Activated CD4-positive, alpha-beta T cell treated with anti-CD3 and anti-CD28 coated beads, Interleukin-2, amount 10 ng/mL, durations not matched to agents 7 days and 5 days (primary cell): ENCODE measurements at regions of chr11 and their contacts with region 1.

Region 1: DNA sequence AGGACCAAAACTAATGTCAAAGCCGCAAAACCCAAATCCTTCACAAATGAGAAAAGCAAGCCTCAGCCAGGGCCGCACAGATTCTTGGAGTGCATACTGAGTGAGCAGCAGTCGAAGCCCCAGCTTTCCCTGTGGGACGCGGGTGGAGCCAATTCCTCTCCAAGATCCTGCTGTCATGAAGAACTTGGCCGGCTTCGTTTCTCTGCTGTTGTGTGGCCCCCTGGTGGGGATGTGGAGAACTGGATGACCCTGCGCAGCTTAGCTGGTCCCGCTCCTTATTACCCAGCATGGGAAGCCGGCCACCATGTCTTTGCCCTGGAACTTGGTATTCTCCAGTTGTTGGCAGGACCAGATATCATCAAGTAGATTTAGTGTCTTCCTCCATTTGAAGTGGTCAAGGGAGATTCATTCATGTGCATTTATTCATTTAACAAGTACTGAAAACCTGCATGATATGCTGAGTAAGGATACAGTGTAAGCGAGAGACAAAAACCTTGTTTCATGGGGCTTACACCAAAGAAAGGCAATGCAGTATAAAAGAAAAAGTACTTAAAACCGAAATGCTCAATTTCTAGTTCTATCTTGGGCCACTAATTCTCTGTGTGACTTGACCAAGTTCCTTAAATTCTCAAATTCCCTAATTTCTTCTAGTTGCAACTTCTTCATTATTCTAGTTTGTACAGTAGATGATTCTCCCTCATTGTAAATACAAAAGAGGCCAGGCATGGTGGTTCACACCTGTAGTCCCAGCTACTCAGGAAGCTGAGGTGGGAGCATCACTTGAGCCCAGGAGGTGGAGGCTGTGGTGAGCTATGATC is 56.7 kb upstream of the CRTAM start:
- DNase-seq: peak; percentile 75
- H3K4me3 Mint-ChIP-seq: no peak overlapping the region
- H3K27ac Mint-ChIP-seq: no peak overlapping the region
- H3K4me1 Mint-ChIP-seq: peaks cover 8% of the 10 kb centered on the region
- H3K27me3 Mint-ChIP-seq: no peaks in the 10 kb centered on the region

Region 2: GRCh38 chr11:122202951-122203456 is 578.6 kb before region 1 on chr11:
- CTCF ChIA-PET with region 1: no interaction called
- POLR2A ChIA-PET with region 1: no interaction called
- DNase-seq: peak; percentile 45
- H3K4me3 Mint-ChIP-seq: no peak overlapping the region
- H3K27ac Mint-ChIP-seq: no peak overlapping the region
- H3K4me1 Mint-ChIP-seq: no peaks in the 10 kb centered on the region
- H3K27me3 Mint-ChIP-seq: peaks cover 4% of the 10 kb centered on the region

Region 3: DNA sequence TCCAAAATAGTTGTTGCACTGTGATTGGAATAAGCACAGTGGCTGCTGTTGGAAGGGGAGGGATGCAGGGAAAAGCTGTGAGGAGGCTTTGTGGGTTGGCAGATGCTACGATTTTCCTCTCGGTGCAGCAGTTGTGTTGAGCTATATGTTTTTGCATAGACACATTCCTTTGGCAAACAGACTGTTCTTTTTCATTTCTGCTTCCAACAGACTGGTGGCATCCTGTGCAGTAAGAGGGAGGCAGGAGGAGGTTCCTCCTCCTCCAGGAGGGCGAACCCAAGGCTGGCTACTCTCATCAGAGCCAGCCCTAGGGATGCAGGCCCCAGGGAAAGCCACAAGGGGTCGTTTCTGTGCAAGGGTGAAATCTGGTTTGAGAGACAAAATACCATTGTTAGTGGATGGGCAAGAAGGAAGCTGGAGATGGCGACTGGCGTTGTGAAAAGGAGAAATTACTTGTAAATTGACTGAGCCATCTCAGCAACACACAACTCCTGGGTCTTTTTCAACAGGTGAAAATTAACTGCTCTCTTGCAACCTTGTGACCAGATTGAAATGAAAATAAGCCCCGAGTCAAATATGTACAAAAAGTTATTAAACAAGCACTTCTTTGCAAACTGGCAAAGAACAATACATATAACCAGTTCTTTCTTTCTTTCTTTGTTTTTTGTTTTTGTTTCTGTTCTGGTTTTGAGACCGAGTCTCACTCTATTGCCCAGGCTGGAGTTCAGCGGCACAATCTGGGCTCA is 152.6 kb before region 1 on chr11:
- CTCF ChIA-PET with region 1: interaction called, 14 read pairs
- POLR2A ChIA-PET with region 1: no interaction called
- DNase-seq: peak; percentile 49
- H3K4me3 Mint-ChIP-seq: no peak overlapping the region
- H3K27ac Mint-ChIP-seq: no peak overlapping the region
- H3K4me1 Mint-ChIP-seq: peaks cover 6% of the 10 kb centered on the region
- H3K27me3 Mint-ChIP-seq: peaks cover under 1% of the 10 kb centered on the region

Region 4: DNA sequence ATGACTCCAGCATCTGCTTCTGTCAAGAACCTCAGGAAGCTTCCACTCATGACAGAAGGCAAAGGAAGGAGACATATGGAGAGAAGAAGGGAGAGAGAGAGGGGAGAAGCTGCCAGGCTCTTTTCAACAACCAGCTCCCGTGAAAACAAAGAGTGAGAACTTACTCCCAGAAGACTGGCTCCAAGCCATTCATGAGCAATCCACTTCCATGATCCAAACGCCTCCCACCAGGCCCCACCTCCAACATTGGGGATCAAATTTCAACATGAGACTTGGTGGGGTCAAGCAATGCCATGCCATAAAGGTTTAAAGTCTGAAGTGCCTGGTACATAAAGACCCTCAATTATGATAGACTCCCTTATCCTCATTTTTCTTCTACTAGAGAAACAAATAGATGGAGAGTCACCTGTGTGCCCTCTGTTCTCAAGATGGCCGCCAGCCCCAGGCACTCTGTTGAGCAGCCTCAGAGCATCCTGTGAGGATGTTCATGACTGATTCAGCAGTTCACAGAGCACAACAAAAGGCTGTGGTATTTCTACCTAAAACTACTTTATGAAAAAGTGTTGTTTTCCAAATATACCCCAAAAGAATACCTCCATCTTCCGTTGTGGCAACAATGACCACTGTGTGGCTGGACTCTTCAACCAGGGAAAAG is 12.3 kb before region 1 on chr11:
- CTCF ChIA-PET with region 1: interaction called, 15 read pairs
- POLR2A ChIA-PET with region 1: no interaction called
- DNase-seq: no peak
- H3K4me3 Mint-ChIP-seq: no peak overlapping the region
- H3K27ac Mint-ChIP-seq: no peak overlapping the region
- H3K4me1 Mint-ChIP-seq: no peaks in the 10 kb centered on the region
- H3K27me3 Mint-ChIP-seq: no peaks in the 10 kb centered on the region

Region 5: DNA sequence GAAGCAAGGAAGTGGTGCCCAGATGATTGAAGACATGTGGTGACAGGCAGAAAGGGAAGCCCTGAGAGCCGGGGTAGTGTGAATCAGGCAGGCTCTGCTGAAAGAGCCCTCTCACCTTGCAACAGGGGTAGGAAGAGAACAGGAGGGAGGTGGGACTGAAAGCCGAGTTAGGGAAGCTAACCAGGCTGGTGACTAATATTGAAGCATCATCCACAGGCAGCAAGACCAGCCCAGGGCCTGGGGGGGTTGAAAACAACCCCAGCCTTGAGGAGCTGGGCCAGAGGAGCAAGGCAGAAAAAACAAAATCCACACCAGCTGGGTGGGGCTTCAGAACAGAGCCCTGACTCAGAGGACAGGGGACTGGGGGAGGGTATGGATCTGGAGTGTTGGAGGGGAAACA is 21.7 kb after region 1 on chr11:
- CTCF ChIA-PET with region 1: no interaction called
- POLR2A ChIA-PET with region 1: no interaction called
- DNase-seq: no peak
- H3K4me3 Mint-ChIP-seq: no peak overlapping the region
- H3K27ac Mint-ChIP-seq: no peak overlapping the region
- H3K4me1 Mint-ChIP-seq: peaks cover 9% of the 10 kb centered on the region
- H3K27me3 Mint-ChIP-seq: no peaks in the 10 kb centered on the region

Region 6: GRCh38 chr11:122821169-122821568 is 39.6 kb after region 1 on chr11:
- CTCF ChIA-PET with region 1: no interaction called
- POLR2A ChIA-PET with region 1: no interaction called
- DNase-seq: no peak
- H3K4me3 Mint-ChIP-seq: no peak overlapping the region
- H3K27ac Mint-ChIP-seq: no peak overlapping the region
- H3K4me1 Mint-ChIP-seq: peaks cover 1% of the 10 kb centered on the region
- H3K27me3 Mint-ChIP-seq: peaks cover 6% of the 10 kb centered on the region

Region 7: GRCh38 chr11:123235117-123235655 is 453.6 kb after region 1 on chr11:
- CTCF ChIA-PET with region 1: no interaction called
- POLR2A ChIA-PET with region 1: no interaction called
- DNase-seq: peak; percentile 26
- H3K4me3 Mint-ChIP-seq: no peak overlapping the region
- H3K27ac Mint-ChIP-seq: peak overlapping the region; percentile 15
- H3K4me1 Mint-ChIP-seq: peaks cover 39% of the 10 kb centered on the region
- H3K27me3 Mint-ChIP-seq: peaks cover 5% of the 10 kb centered on the region